OCI-LY7 (cell line): ENCODE measurements at regions of chr10 and their contacts with region 1.

Region 1: DNA sequence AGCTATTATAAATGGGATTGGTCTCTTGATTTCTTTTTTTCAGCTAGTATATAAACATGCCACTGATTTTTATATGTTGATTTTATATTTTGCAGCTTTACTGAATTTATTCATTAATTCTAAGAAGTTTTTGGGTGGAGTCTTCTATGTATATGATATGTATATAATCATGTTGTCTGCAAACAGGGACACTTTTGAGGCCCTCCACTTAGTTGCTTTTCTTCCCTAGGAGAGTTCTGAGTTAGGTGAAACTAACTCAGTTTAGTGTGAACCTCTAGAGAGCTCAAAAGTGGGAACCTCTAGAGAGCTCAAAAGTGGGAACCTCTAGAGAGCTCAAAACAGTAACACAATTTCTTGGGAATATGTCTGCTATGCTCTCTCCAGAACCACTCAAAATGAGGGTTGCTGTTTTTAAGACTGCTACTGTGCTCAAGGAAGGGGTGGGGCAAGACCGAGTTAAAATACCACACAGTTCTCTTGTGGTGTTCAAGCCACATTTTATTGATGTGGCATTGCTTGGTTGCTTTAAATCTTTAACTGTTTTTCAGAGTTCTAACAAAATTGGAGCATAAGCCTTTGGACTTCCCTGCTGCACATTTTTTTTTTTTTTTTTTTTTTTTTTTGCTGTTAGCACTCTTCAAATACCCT is 13.2 kb downstream of the CCDC7 start:
- DNase-seq: no peak
- H3K4me3 ChIP-seq: no peak overlapping the region
- H3K27ac ChIP-seq: no peak overlapping the region
- H3K4me1 ChIP-seq: no peaks in the 10 kb centered on the region
- CTCF ChIP-seq: no peak

Region 2: GRCh38 chr10:32055813-32056600 is 403.2 kb before region 1 on chr10 and contains the start of gene KIF5B:
- CTCF ChIA-PET with region 1: no interaction called
- POLR2A ChIA-PET with region 1: no interaction called
- intact Hi-C with region 1: no loop called
- DNase-seq: peak; percentile 92
- H3K4me3 ChIP-seq: peak within 1 kb of the TSS; percentile 87
- H3K27ac ChIP-seq: peak within 1 kb of the TSS; percentile 78
- H3K4me1 ChIP-seq: peaks cover 37% of the 10 kb centered on the region
- CTCF ChIP-seq: no peak
- total RNA-seq, gene KIF5B: 63.8 and 73.8 TPM in 2 replicates

Region 3: DNA sequence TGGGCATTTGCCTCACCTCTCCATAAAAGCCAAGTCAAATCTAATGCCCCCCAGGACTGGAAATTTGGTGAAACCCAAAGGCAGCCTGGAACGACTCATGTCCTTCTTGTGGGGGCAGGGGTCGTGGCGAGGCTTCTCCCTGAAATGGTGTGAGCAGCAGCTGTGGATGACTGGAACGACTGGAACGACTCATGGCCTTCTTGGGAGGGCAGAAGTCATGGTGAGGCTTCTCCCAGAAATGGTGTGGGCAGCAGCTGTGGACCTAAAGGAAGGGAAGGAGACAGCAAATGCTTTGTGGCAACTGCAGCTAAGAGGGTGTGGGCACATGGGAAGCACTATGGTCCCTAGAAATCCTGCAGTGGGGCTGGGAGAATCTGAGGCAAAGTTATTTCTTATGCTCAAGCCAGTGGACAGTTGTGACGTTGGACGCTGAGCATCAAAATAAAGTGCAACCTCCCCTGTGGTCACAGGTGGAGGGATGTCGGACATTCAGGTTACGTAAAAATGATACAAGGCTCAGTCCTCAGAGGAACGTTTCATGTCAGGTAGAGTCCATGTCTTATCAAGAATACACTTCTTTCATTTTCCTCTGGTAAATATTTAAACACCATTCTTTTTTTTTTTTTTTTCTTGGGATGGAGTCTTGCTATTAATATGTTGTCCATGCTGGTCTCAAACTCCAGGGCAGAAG is 296.0 kb before region 1 on chr10:
- CTCF ChIA-PET with region 1: no interaction called
- POLR2A ChIA-PET with region 1: no interaction called
- intact Hi-C with region 1: no loop called
- DNase-seq: no peak
- H3K4me3 ChIP-seq: no peak overlapping the region
- H3K27ac ChIP-seq: no peak overlapping the region
- H3K4me1 ChIP-seq: no peaks in the 10 kb centered on the region
- CTCF ChIP-seq: no peak

Region 4: GRCh38 chr10:32929632-32930031 is 470.5 kb after region 1 on chr10:
- CTCF ChIA-PET with region 1: no interaction called
- POLR2A ChIA-PET with region 1: no interaction called
- intact Hi-C with region 1: loop called (anchors 10 kb)
- DNase-seq: no peak
- H3K4me3 ChIP-seq: no peak overlapping the region
- H3K27ac ChIP-seq: no peak overlapping the region
- H3K4me1 ChIP-seq: peaks cover 8% of the 10 kb centered on the region
- CTCF ChIP-seq: no peak